ENCODE measurements at regions of chr7 and their contacts with region 1.

Region 1: GRCh38 chr7:127447326-127447945 is 54.9 kb upstream of the ZNF800 start:
- DNase-seq: peak; percentile 56
- H3K4me3 Mint-ChIP-seq: no peak overlapping the region
- H3K27ac Mint-ChIP-seq: no peak overlapping the region
- H3K4me1 Mint-ChIP-seq: no peaks in the 10 kb centered on the region
- H3K27me3 Mint-ChIP-seq: peaks cover 36% of the 10 kb centered on the region

Region 2: DNA sequence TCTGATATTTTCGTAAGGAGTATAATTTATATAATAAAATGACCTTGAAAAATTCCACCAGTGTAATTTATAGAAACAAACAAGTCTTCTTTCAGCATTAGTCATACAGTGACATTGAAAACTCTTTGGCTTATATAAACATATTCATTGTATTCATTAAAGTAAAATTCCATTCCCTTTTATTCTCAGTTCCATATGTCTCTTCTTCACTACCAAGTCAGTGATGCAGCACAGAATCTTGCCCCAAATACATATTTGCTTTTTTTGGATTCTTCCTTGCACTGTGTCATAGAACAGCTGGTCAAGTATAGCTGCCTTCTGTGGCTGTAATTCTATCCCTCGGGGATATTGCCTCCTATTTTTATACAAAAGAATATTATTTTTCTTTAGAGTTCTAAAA is 1633.3 kb before region 1 on chr7:
- intact Hi-C with region 1: no loop called
- DNase-seq: no peak
- H3K4me3 Mint-ChIP-seq: no peak overlapping the region
- H3K27ac Mint-ChIP-seq: no peak overlapping the region
- H3K4me1 Mint-ChIP-seq: no peaks in the 10 kb centered on the region
- H3K27me3 Mint-ChIP-seq: no peaks in the 10 kb centered on the region

Region 3: GRCh38 chr7:127107601-127108007 is 339.8 kb before region 1 on chr7:
- intact Hi-C with region 1: loop called (anchors 1 kb)
- DNase-seq: peak; percentile 10
- H3K4me3 Mint-ChIP-seq: no peak overlapping the region
- H3K27ac Mint-ChIP-seq: no peak overlapping the region
- H3K4me1 Mint-ChIP-seq: no peaks in the 10 kb centered on the region
- H3K27me3 Mint-ChIP-seq: no peaks in the 10 kb centered on the region

Region 4: DNA sequence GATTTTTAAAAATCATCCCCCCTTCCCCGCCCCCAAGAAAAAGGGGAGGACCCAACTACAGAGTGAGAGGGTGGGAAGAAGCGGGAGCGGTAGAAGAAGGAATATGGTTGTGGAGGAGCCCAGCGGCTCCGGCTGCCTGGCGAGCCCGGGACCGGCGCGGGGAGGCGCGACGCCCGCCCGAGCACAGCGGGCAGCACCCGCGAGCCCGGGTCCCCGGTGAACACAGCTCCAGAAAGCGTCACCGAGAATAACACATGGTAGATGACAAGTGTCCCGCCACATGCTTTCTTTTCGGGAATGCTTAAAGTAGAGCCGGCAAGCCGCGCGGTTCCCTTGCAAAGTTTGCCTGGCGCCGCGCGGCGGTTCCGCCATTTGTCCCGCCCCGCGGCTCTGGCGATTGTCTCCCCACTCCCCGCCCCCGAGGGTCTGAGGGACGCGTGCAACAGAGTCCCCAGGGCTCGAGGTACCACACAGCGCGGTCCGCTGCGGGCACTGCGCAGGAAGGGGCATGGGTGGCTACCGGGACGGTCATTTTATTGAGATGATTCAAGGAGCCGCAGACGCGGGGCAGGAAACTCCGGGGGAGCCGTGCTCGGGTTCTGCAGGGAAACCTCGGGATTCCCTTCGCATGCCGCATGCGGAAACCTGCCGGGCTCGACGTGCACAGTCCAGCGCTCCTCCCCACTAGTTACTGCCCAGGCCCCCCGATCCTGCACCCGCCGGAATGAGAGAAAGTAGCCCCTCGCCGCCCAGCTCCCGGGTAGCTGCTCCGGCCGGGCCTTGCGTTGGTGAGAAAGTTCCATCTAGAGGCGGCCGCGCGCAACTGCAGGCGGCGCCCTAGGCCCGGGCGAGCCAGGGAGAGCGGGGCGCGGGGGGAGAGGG is 193.9 kb before region 1 on chr7:
- intact Hi-C with region 1: loop called (anchors 2 kb)
- DNase-seq: peak; percentile 40
- H3K4me3 Mint-ChIP-seq: peak overlapping the region; percentile 81
- H3K27ac Mint-ChIP-seq: no peak overlapping the region
- H3K4me1 Mint-ChIP-seq: peaks cover 17% of the 10 kb centered on the region
- H3K27me3 Mint-ChIP-seq: peaks cover 73% of the 10 kb centered on the region

Region 5: DNA sequence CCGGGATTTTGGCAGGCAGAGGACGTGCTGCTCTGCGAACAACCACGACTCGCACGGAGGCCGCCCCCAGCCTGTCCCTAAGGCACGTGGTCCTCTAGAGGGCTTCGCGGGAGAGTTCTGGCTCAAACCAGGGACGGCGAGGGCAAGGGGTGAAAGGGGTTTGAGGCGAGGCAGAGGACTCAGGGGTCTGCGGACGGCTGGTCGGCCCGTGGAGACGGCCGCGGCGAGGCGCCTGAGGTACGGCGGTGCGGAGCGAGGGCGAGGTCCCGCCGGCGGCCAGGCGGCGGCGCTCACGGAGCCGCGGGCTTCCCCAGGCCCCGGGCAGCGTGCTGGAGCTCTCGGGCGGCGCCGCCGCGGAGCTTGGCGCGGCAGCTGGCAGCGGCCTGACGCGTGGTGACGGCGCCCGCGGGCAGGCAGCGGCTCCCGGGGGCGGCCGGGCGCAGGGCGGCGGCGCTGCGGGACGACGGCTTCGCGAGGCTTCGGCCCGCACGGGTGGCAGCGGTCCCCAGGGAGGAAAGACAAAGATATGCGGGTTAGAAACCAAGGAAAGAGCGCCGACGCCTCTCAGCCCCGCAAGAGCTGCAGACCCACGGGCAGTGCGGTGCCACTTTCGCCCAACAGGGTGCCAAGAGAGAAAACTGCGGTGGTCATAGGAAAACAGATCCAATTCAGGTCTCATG is 99.7 kb before region 1 on chr7:
- intact Hi-C with region 1: loop called (anchors 1 kb)
- DNase-seq: peak; percentile 59
- H3K4me3 Mint-ChIP-seq: peak overlapping the region; percentile 25
- H3K27ac Mint-ChIP-seq: no peak overlapping the region
- H3K4me1 Mint-ChIP-seq: peaks cover 7% of the 10 kb centered on the region
- H3K27me3 Mint-ChIP-seq: peaks cover 24% of the 10 kb centered on the region

Region 6: GRCh38 chr7:127413962-127414361 is 33.5 kb before region 1 on chr7:
- intact Hi-C with region 1: loop called (anchors 1 kb)
- DNase-seq: no peak
- H3K4me3 Mint-ChIP-seq: peak overlapping the region; percentile 62
- H3K27ac Mint-ChIP-seq: peak overlapping the region; percentile 66
- H3K4me1 Mint-ChIP-seq: peaks cover 54% of the 10 kb centered on the region
- H3K27me3 Mint-ChIP-seq: peaks cover 20% of the 10 kb centered on the region